ENCODE measurements at regions of chr5 and their contacts with region 1.

Region 1: GRCh38 chr5:84274585-84275468 is 109.9 kb downstream of the EDIL3 start:
- DNase-seq: peak in 1 of 2 experiments; percentile 36
- H3K4me3 ChIP-seq: no peak overlapping the region
- H3K4me3 Mint-ChIP-seq: no peak overlapping the region
- H3K27ac Mint-ChIP-seq: no peak overlapping the region
- H3K4me1 ChIP-seq: no peaks in the 10 kb centered on the region
- H3K4me1 Mint-ChIP-seq: no peaks in the 10 kb centered on the region
- H3K27me3 ChIP-seq: no peaks in the 10 kb centered on the region
- H3K27me3 Mint-ChIP-seq: peaks cover 3% of the 10 kb centered on the region
- CTCF ChIP-seq: peak; percentile 61

Region 2: DNA sequence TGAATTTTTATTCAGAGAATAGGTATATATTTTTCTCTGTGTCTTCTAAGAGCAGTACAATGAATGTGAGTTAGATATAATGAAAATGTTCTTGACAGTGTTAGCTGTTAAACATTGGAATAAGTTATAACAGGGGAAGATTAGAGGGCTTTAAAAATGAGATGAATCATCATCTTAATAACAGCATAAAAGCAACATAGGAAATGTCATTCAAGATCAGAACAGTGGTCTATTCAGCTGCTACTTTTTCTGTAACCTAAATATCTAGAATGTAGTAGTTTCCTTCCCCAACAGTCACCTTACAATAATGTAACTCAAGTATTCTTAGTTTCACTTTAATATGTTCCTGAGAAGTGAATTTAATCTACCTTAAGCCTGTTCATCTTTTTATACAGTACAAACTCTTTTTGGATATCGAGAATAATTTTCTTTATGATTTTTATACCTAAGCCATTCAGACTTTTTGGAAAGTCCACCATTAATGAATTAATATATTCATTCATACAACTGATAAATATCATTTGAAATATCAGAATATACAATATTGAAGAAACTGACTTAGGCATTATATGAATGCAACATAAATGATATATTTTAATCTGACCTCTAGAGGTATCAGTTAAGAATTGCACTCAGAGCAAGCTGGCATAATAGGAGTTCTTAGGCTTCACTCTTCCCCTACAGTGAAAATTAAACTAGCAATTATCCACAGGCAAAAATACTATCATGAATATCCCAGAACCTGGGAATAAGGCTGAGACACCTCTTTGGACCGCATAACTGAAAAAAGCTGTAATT is 176.0 kb after region 1 on chr5:
- CTCF ChIA-PET with region 1: no interaction called
- POLR2A ChIA-PET with region 1: no interaction called
- intact Hi-C with region 1: loop called (anchors 1 kb)
- DNase-seq: no peak
- H3K4me3 ChIP-seq: no peak overlapping the region
- H3K4me3 Mint-ChIP-seq: no peak overlapping the region
- H3K27ac Mint-ChIP-seq: no peak overlapping the region
- H3K4me1 ChIP-seq: no peaks in the 10 kb centered on the region
- H3K4me1 Mint-ChIP-seq: no peaks in the 10 kb centered on the region
- H3K27me3 ChIP-seq: no peaks in the 10 kb centered on the region
- H3K27me3 Mint-ChIP-seq: no peaks in the 10 kb centered on the region
- CTCF ChIP-seq: no peak

Region 3: DNA sequence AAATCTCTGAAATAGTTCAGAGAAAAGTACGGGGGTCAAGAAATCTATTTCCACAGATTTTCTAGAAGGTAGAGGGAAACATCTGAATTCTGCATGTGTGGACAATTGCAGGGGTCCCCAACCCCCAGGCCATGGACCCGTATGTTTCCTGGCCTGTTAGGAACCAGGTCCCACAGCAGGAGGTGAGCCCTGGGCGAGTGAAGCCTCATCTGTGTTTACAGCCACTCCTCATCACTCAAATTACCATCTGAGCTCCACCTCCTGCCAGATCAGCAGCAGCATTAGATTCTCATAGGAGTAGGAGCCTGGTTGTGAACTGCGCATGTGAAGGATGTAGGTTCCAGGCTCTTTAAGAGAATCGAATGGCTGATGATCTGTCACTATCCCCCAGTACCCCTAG is 310.4 kb after region 1 on chr5:
- CTCF ChIA-PET with region 1: no interaction called
- POLR2A ChIA-PET with region 1: no interaction called
- intact Hi-C with region 1: loop called (anchors 10 kb)
- DNase-seq: no peak
- H3K4me3 ChIP-seq: no peak overlapping the region
- H3K4me3 Mint-ChIP-seq: no peak overlapping the region
- H3K27ac Mint-ChIP-seq: no peak overlapping the region
- H3K4me1 ChIP-seq: no peaks in the 10 kb centered on the region
- H3K4me1 Mint-ChIP-seq: no peaks in the 10 kb centered on the region
- H3K27me3 ChIP-seq: no peaks in the 10 kb centered on the region
- H3K27me3 Mint-ChIP-seq: peaks cover 5% of the 10 kb centered on the region
- CTCF ChIP-seq: no peak

Region 4: GRCh38 chr5:84603568-84604185 is 328.9 kb after region 1 on chr5:
- CTCF ChIA-PET with region 1: no interaction called
- POLR2A ChIA-PET with region 1: no interaction called
- intact Hi-C with region 1: no loop called
- DNase-seq: no peak
- H3K4me3 ChIP-seq: no peak overlapping the region
- H3K4me3 Mint-ChIP-seq: no peak overlapping the region
- H3K27ac Mint-ChIP-seq: no peak overlapping the region
- H3K4me1 ChIP-seq: no peaks in the 10 kb centered on the region
- H3K4me1 Mint-ChIP-seq: no peaks in the 10 kb centered on the region
- H3K27me3 ChIP-seq: no peaks in the 10 kb centered on the region
- H3K27me3 Mint-ChIP-seq: no peaks in the 10 kb centered on the region
- CTCF ChIP-seq: no peak

Measured in Caco-2 (cell line).